Thyroid gland (tissue), 4 donors: ENCODE measurements at regions of chr7 and their contacts with region 1.

Region 1: GRCh38 chr7:80392229-80393169 is 119.4 kb downstream of the GNAT3 start:
- DNase-seq: no peak
- H3K4me3 ChIP-seq: no peak overlapping the region
- H3K27ac ChIP-seq: no peak overlapping the region
- H3K4me1 ChIP-seq: no peaks in the 10 kb centered on the region
- H3K27me3 ChIP-seq: no peaks in the 10 kb centered on the region
- CTCF ChIP-seq: peak; percentile 29 to 75 (median 52)
- POLR2A ChIP-seq: no peak

Region 2: GRCh38 chr7:79770063-79770462 is 622.4 kb before region 1 on chr7:
- intact Hi-C with region 1: no loop called
- DNase-seq: no peak
- H3K4me3 ChIP-seq: no peak overlapping the region
- H3K27ac ChIP-seq: no peak overlapping the region
- H3K4me1 ChIP-seq: no peaks in the 10 kb centered on the region
- H3K27me3 ChIP-seq: no peaks in the 10 kb centered on the region
- CTCF ChIP-seq: no peak
- POLR2A ChIP-seq: no peak

Region 3: DNA sequence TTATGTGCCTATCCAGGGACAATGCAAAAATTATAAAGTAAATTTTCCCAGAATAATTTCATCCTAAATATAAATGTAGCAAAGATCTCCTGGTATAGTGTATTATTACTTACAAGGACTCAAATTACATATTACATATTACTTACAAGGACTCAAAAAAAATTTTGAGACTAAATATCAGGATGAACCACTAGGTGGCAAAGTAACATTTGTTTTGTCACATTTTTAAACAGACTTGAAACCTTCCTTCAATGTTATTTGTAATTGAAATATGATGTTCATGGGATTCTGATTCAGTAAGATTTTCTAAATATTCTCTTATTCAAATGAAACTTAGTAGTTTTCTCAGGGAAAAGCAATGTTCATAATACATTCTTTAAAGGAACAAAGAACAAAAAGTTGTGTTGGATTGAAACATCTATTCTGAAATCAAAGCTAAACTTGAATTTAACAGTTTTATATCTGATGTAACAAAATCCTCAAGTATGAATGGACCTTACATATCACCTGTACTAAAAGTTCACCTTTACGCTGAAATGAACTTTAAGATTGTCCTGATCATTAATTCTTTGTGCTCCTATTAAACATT is 332.2 kb before region 1 on chr7:
- intact Hi-C with region 1: loop called (anchors 10 kb)
- DNase-seq: no peak
- H3K4me3 ChIP-seq: no peak overlapping the region
- H3K27ac ChIP-seq: no peak overlapping the region
- H3K4me1 ChIP-seq: no peaks in the 10 kb centered on the region
- H3K27me3 ChIP-seq: no peaks in the 10 kb centered on the region
- CTCF ChIP-seq: peak in 5 of 6 experiments; percentile 33 to 71 (median 58)
- POLR2A ChIP-seq: no peak

Region 4: DNA sequence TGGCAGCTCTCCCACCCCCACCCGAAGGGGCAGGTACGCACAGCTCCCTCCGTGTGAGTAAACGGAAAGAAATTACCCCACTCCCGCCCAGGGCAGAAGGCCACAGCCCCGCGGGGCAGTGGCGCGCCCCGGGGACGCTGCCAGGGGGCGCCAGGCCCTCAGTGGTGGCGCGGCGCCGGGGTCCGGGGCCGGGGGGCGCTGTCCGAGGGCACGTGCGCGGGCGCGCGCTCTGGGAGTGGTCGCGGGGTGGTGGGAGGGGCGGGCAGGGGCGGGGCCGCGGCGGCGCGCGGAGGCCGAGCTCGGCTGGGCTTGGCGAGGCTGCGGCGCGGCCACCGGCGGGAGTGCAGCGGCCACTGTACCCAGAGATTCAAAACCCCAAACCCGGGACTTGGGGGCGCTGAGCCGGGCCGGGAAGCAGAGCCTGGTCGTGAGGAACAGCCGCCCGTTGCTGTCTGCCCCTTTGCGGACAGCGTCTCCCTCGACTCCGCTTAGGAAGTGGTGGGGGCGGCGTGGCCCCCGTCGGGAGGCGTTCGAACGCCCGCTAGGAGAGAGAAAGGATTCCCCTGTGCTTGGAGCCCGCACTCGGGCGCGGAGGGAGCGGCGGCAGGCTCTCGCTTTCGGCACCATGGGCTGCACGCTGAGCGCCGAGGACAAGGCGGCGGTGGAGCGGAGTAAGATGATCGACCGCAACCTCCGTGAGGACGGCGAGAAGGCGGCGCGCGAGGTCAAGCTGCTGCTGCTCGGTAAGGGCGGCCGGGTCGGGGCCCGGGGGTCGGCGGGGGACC is 257.8 kb before region 1 on chr7 and contains the start of gene GNAI1:
- intact Hi-C with region 1: loop called (anchors 10 kb)
- DNase-seq: peak; percentile 85 to 88
- H3K4me3 ChIP-seq: peak within 1 kb of the TSS; percentile 81 to 92 (median 92)
- H3K27ac ChIP-seq: peak within 1 kb of the TSS; percentile 87 to 96 (median 94)
- H3K4me1 ChIP-seq: peaks cover 8 to 17% of the 10 kb centered on the region in 2 donors
- H3K27me3 ChIP-seq: no peaks in the 10 kb centered on the region
- CTCF ChIP-seq: peak in 3 of 6 experiments; percentile 60 to 68 (median 63)
- POLR2A ChIP-seq: peak; percentile 73 to 85
- total RNA-seq, gene GNAI1: 32.1 to 52.7 (median 47.4) TPM